Testis (tissue), 5 donors: ENCODE measurements at regions of chr1 and their contacts with region 1.

Region 1: GRCh38 chr1:119623678-119624077 is 24.4 kb downstream of the ZNF697 start:
- DNase-seq: no peak
- H3K4me3 ChIP-seq: peak overlapping the region; percentile 21 to 38
- H3K27ac ChIP-seq: peak overlapping the region in 1 of 2 donors; percentile 19
- H3K4me1 ChIP-seq: peaks cover 13% of the 10 kb centered on the region
- H3K27me3 ChIP-seq: no peaks in the 10 kb centered on the region
- CTCF ChIP-seq: no peak
- POLR2A ChIP-seq: no peak

Region 2: DNA sequence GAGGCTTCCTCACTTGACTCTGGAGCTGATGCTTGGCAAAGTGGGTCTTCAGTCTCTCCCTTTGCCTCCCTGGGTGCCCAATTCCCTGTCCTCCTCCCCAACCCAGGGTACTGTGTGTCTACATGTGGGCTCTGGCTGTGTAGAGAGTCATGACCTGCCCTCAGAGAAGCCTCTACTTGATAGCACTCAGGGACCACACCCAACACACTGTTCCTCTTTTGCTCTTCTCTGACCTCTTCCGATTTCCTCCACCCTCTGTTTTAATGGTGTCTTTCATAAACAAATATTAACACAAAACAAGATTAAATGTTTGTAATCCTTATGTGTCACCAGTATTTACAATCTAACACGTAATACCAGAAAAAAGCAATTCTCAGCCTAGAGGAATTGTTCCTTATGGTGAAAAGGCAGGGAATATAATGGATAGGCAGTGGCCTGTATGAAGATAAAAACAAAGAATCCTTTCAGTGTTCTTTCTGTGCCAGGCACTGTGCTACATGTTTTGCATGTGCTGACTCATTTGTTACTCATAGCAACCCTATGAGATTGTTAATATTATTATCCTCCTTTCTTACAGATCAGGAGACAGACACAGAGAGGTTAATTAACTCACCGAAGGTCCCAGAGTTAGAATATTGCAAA is 58.4 kb before region 1 on chr1:
- intact Hi-C with region 1: no loop called
- DNase-seq: no peak
- H3K4me3 ChIP-seq: no peak overlapping the region
- H3K27ac ChIP-seq: no peak overlapping the region
- H3K4me1 ChIP-seq: peaks cover 10% of the 10 kb centered on the region
- H3K27me3 ChIP-seq: no peaks in the 10 kb centered on the region
- CTCF ChIP-seq: no peak
- POLR2A ChIP-seq: no peak

Region 3: GRCh38 chr1:119674835-119675289 is 51.2 kb after region 1 on chr1:
- intact Hi-C with region 1: loop called (anchors 5 kb)
- DNase-seq: no peak
- H3K4me3 ChIP-seq: peak overlapping the region; percentile 16 to 40
- H3K27ac ChIP-seq: peak overlapping the region; percentile 67 to 75
- H3K4me1 ChIP-seq: peaks cover 25% of the 10 kb centered on the region
- H3K27me3 ChIP-seq: no peaks in the 10 kb centered on the region
- CTCF ChIP-seq: no peak
- POLR2A ChIP-seq: no peak